K562 (cell line): ENCODE measurements at regions of chr9 and their contacts with region 1.

Region 1: GRCh38 chr9:133375724-133376654 is at the starts of genes STKLD1 and SURF4:
- DNase-seq: peak; percentile 97 to 99 (median 98)
- ATAC-seq: peak; percentile 91
- H3K4me3 ChIP-seq: peak within 1 kb of the TSS; percentile 87
- H3K27ac ChIP-seq: peak within 1 kb of the TSS; percentile 97
- H3K4me1 ChIP-seq: peaks cover 39 to 50% of the 10 kb centered on the region in 2 experiments; a peak in 4 of 5 replicates
- H3K27me3 ChIP-seq: no peaks in the 10 kb centered on the region
- CTCF ChIP-seq: no peak; a peak in 1 of 6 replicates
- EP300 ChIP-seq: no peak
- POLR2A ChIP-seq: peak; percentile 58; the same call in 1 of the 2 replicates
- RAD21 ChIP-seq: no peak
- polyA plus RNA-seq, gene STKLD1: 0.10 TPM in 1 of 2 experiments, not detected in the other
- polyA plus RNA-seq, gene SURF4: 8.4 to 13.5 TPM

Region 2: DNA sequence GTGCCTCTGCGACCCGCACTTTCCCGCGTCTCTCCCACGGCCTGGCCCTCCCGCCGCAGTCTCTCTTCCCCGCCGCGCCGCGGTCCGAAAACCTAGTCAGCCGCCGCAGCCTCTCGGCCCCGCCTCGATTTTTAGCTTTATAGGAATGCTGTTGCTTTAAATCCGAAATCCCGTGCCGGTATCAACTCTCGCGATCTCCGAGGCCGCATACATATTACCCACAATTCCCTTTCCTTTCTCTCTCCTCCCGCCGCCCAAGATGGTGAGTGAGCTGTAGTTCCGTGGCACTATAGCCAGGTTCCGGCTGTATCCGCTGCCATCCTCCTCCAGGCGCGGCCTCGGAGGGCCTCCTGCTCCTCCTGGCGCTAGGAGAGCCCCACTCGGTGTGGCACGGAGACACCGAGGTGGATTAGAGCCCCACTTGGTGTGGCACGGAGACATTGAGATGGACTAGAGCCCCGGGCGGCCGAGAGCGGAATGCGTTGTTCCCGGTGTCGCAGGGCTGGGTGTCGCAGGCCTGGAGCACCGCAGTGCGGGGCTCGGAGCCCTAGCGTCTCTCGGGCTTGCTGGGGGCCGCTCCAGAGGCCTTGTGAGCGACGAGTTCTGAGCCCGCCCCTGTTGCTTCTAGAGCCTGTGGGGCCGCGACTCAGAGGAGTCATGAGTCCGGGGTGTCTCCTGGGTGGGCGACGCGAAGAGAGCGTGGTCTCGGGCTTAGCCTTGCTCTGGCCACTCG is 27.8 kb before region 1 on chr9 and contains the starts of genes MED22 and RPL7A:
- CTCF ChIA-PET with region 1: no interaction called
- POLR2A ChIA-PET with region 1: interaction called, 17 read pairs
- in situ Hi-C with region 1: no loop called
- intact Hi-C with region 1: no loop called
- DNase-seq: peak; percentile 72 to 96 (median 85)
- ATAC-seq: peak; percentile 77
- H3K4me3 ChIP-seq: peak within 1 kb of the TSS; percentile 100
- H3K27ac ChIP-seq: peak within 1 kb of the TSS; percentile 98
- H3K4me1 ChIP-seq: peaks cover 16 to 31% of the 10 kb centered on the region in 2 experiments; a peak in 4 of 5 replicates
- H3K27me3 ChIP-seq: no peaks in the 10 kb centered on the region
- CTCF ChIP-seq: peak in 1 of 3 experiments; percentile 16; a peak in 1 of 6 replicates
- EP300 ChIP-seq: no peak
- POLR2A ChIP-seq: peak; percentile 99
- RAD21 ChIP-seq: no peak
- polyA plus RNA-seq, gene MED22: 0.73 to 1.4 TPM
- polyA plus RNA-seq, gene RPL7A: 1,935 to 2,418 TPM

Region 3: GRCh38 chr9:133356391-133357091 is 19.4 kb before region 1 on chr9 and contains the starts of genes SURF1 and SURF2:
- CTCF ChIA-PET with region 1: interaction called, 4 read pairs
- POLR2A ChIA-PET with region 1: interaction called, 109 read pairs
- in situ Hi-C with region 1: no loop called
- intact Hi-C with region 1: no loop called
- DNase-seq: peak; percentile 83 to 91 (median 88)
- ATAC-seq: peak; percentile 85
- H3K4me3 ChIP-seq: peak within 1 kb of the TSS; percentile 67
- H3K27ac ChIP-seq: peak within 1 kb of the TSS; percentile 48
- H3K4me1 ChIP-seq: peaks cover 17 to 45% of the 10 kb centered on the region in 2 experiments; a peak in 4 of 5 replicates
- H3K27me3 ChIP-seq: no peaks in the 10 kb centered on the region
- CTCF ChIP-seq: peak in 2 of 3 experiments; percentile 21 to 43; a peak in 3 of 6 replicates
- EP300 ChIP-seq: no peak
- POLR2A ChIP-seq: peak; percentile 79
- RAD21 ChIP-seq: no peak; a peak in 1 of 4 replicates
- polyA plus RNA-seq, gene SURF1: 16.1 to 16.3 TPM
- polyA plus RNA-seq, gene SURF2: 5.5 to 10.2 TPM

Region 4: GRCh38 chr9:133362359-133363044 is 13.5 kb before region 1 on chr9:
- CTCF ChIA-PET with region 1: no interaction called
- POLR2A ChIA-PET with region 1: interaction called, 109 read pairs
- in situ Hi-C with region 1: no loop called
- intact Hi-C with region 1: no loop called
- DNase-seq: no peak
- ATAC-seq: peak; percentile 6; the same call in 2 of the 3 replicates
- H3K4me3 ChIP-seq: no peak overlapping the region
- H3K27ac ChIP-seq: no peak overlapping the region
- H3K4me1 ChIP-seq: peaks cover 9 to 37% of the 10 kb centered on the region in 2 experiments; a peak in 4 of 5 replicates
- H3K27me3 ChIP-seq: no peaks in the 10 kb centered on the region
- CTCF ChIP-seq: no peak
- EP300 ChIP-seq: no peak
- POLR2A ChIP-seq: peak; percentile 15; the same call in 1 of the 2 replicates
- RAD21 ChIP-seq: no peak

Region 5: GRCh38 chr9:133387425-133388079 is 11.6 kb after region 1 on chr9:
- CTCF ChIA-PET with region 1: no interaction called
- POLR2A ChIA-PET with region 1: interaction called, 13 read pairs
- in situ Hi-C with region 1: no loop called
- intact Hi-C with region 1: no loop called
- DNase-seq: no peak
- ATAC-seq: no peak
- H3K4me3 ChIP-seq: no peak overlapping the region
- H3K27ac ChIP-seq: no peak overlapping the region
- H3K4me1 ChIP-seq: peaks cover 0 to 17% of the 10 kb centered on the region in 2 experiments; a peak in 2 of 5 replicates
- H3K27me3 ChIP-seq: peaks cover 29 to 55% of the 10 kb centered on the region in 2 experiments; a peak in 4 of 5 replicates
- CTCF ChIP-seq: no peak
- EP300 ChIP-seq: no peak
- POLR2A ChIP-seq: no peak
- RAD21 ChIP-seq: no peak